H1 (cell line): ENCODE measurements at regions of chr2 and their contacts with region 1.

Region 1: GRCh38 chr2:7031547-7032245 is 114.5 kb downstream of the RNF144A start:
- DNase-seq: no peak
- H3K4me3 ChIP-seq: no peak overlapping the region
- H3K27ac ChIP-seq: no peak overlapping the region
- H3K4me1 ChIP-seq: no peaks in the 10 kb centered on the region; a peak in 1 of 7 replicates
- H3K27me3 ChIP-seq: no peaks in the 10 kb centered on the region
- CTCF ChIP-seq: no peak
- EP300 ChIP-seq: no peak
- POLR2A ChIP-seq: no peak
- RAD21 ChIP-seq: no peak

Region 2: GRCh38 chr2:6865346-6866274 is 166.1 kb before region 1 on chr2 and contains the start of gene CMPK2:
- CTCF ChIA-PET with region 1: interaction called, 10 read pairs
- POLR2A ChIA-PET with region 1: no interaction called
- DNase-seq: peak in 1 of 2 experiments; percentile 73
- H3K4me3 ChIP-seq: peak within 1 kb of the TSS; percentile 54 to 61 (median 57)
- H3K27ac ChIP-seq: no peak within 1 kb of the TSS
- H3K4me1 ChIP-seq: peaks cover 0 to 5% (median 2%) of the 10 kb centered on the region in 4 experiments; a peak in 5 of 7 replicates
- H3K27me3 ChIP-seq: peaks cover 9 to 37% (median 23%) of the 10 kb centered on the region in 4 experiments
- CTCF ChIP-seq: no peak
- EP300 ChIP-seq: no peak
- POLR2A ChIP-seq: peak in 1 of 2 experiments; percentile 50; a peak in 1 of 3 replicates
- RAD21 ChIP-seq: no peak
- total RNA-seq, gene CMPK2: 0.28 and 0.31 TPM in 2 replicates

Region 3: DNA sequence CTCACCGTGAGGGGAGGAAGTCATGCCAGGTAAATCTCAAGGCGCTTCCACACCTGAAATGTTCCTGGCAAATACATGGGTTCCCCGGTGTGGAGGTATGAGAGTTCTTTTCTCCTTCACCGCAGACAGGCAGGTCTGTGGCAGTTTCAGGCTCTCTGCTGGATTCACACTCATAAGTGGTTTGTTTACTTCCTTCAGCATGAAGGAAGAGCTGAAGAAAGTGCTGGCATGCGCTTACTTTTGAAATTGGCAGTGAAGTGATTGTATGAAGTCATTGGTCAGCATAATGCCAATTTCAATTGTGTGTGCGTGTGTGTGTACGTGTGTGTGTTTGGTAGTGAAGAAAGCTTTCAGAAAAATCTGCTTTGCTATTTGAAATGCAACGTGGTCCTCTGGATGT is 71.0 kb before region 1 on chr2:
- CTCF ChIA-PET with region 1: no interaction called
- POLR2A ChIA-PET with region 1: no interaction called
- DNase-seq: no peak
- H3K4me3 ChIP-seq: no peak overlapping the region
- H3K27ac ChIP-seq: no peak overlapping the region
- H3K4me1 ChIP-seq: no peaks in the 10 kb centered on the region; a peak in 1 of 7 replicates
- H3K27me3 ChIP-seq: no peaks in the 10 kb centered on the region
- CTCF ChIP-seq: no peak
- EP300 ChIP-seq: no peak
- POLR2A ChIP-seq: no peak
- RAD21 ChIP-seq: no peak

Region 4: GRCh38 chr2:7004636-7005035 is 27.1 kb before region 1 on chr2:
- CTCF ChIA-PET with region 1: no interaction called
- POLR2A ChIA-PET with region 1: no interaction called
- DNase-seq: no peak
- H3K4me3 ChIP-seq: no peak overlapping the region
- H3K27ac ChIP-seq: no peak overlapping the region
- H3K4me1 ChIP-seq: no peaks in the 10 kb centered on the region
- H3K27me3 ChIP-seq: no peaks in the 10 kb centered on the region
- CTCF ChIP-seq: no peak
- EP300 ChIP-seq: no peak
- POLR2A ChIP-seq: no peak
- RAD21 ChIP-seq: no peak